SK-N-SH (cell line): ENCODE measurements at regions of chr14 and their contacts with region 1.

Region 1: GRCh38 chr14:93115069-93115820 is 480 bp downstream of the ITPK1 start:
- DNase-seq: peak; percentile 94
- H3K4me3 ChIP-seq: peak overlapping the region; percentile 83 to 87
- H3K27ac ChIP-seq: peak overlapping the region; percentile 61 to 91; a peak in 3 of 4 replicates
- H3K4me1 ChIP-seq: peaks cover 0 to 33% of the 10 kb centered on the region in 2 experiments; a peak in 3 of 4 replicates
- H3K27me3 ChIP-seq: no peaks in the 10 kb centered on the region
- CTCF ChIP-seq: no peak
- EP300 ChIP-seq: no peak
- RAD21 ChIP-seq: no peak

Region 2: GRCh38 chr14:92880869-92881289 is 234.4 kb before region 1 on chr14:
- CTCF ChIA-PET with region 1: interaction called, 17 read pairs
- POLR2A ChIA-PET with region 1: no interaction called
- DNase-seq: peak; percentile 63
- H3K4me3 ChIP-seq: no peak overlapping the region; a peak in 1 of 4 replicates
- H3K27ac ChIP-seq: peak overlapping the region in 1 of 2 experiments; percentile 19; a peak in 1 of 4 replicates
- H3K4me1 ChIP-seq: peaks cover 0 to 35% of the 10 kb centered on the region in 2 experiments; a peak in 1 of 4 replicates
- H3K27me3 ChIP-seq: peaks cover 22% of the 10 kb centered on the region; the same call in 1 of the 2 replicates
- CTCF ChIP-seq: no peak
- EP300 ChIP-seq: no peak
- RAD21 ChIP-seq: peak; percentile 88

Region 3: DNA sequence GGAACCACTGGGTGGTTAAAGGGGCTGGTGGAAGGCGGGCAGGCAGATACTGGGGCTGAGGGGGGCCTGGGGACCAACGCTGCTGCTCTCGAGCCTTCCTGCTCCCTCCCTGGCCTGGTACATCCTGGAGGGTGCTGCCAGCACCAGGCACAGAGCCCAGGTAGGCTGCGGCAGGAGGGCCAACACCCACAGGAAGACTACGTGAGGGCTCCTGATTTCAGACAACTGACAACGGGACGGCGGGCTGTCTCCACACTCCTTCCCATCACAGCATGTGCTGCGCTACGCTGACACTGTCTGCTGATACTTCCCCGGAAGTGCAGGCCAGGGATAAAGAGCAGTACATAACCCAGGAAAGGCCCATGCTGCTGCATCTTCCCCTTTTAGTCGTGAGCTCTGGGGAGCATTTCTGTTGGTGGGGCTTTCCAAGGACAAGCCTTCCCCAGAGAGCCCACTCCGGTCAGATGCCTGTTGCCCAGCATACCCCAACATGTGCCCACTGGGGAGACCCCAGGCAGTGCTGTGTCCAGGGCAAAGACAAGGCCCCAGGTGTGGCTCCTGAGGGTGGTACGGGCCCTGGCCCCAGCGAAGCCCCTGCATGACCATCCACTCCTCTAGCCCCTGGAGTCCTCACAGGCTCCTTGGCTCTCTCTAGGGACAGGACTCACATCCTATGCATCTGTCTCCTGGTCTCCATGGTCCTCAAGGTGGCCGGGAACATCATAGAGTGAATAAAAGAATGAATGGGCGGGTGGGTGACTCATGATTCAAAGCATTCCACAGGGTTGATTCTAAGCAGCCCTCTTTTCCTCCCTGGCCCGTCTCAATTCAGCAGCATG is 154.3 kb before region 1 on chr14:
- CTCF ChIA-PET with region 1: interaction called, 100 read pairs
- POLR2A ChIA-PET with region 1: interaction called, 4 read pairs
- DNase-seq: no peak
- H3K4me3 ChIP-seq: no peak overlapping the region
- H3K27ac ChIP-seq: peak overlapping the region in 1 of 2 experiments; percentile 97; a peak in 2 of 4 replicates
- H3K4me1 ChIP-seq: peaks cover 3 to 83% of the 10 kb centered on the region in 2 experiments; a peak in 3 of 4 replicates
- H3K27me3 ChIP-seq: no peaks in the 10 kb centered on the region
- CTCF ChIP-seq: no peak
- EP300 ChIP-seq: no peak
- RAD21 ChIP-seq: no peak

Region 4: GRCh38 chr14:93012951-93013719 is 102.1 kb before region 1 on chr14:
- CTCF ChIA-PET with region 1: interaction called, 11 read pairs
- POLR2A ChIA-PET with region 1: interaction called, 3 read pairs
- DNase-seq: no peak
- H3K4me3 ChIP-seq: no peak overlapping the region
- H3K27ac ChIP-seq: peak overlapping the region in 1 of 2 experiments; percentile 98; a peak in 2 of 4 replicates
- H3K4me1 ChIP-seq: peaks cover 8 to 95% of the 10 kb centered on the region in 2 experiments
- H3K27me3 ChIP-seq: no peaks in the 10 kb centered on the region
- CTCF ChIP-seq: no peak
- EP300 ChIP-seq: no peak
- RAD21 ChIP-seq: no peak

Region 5: DNA sequence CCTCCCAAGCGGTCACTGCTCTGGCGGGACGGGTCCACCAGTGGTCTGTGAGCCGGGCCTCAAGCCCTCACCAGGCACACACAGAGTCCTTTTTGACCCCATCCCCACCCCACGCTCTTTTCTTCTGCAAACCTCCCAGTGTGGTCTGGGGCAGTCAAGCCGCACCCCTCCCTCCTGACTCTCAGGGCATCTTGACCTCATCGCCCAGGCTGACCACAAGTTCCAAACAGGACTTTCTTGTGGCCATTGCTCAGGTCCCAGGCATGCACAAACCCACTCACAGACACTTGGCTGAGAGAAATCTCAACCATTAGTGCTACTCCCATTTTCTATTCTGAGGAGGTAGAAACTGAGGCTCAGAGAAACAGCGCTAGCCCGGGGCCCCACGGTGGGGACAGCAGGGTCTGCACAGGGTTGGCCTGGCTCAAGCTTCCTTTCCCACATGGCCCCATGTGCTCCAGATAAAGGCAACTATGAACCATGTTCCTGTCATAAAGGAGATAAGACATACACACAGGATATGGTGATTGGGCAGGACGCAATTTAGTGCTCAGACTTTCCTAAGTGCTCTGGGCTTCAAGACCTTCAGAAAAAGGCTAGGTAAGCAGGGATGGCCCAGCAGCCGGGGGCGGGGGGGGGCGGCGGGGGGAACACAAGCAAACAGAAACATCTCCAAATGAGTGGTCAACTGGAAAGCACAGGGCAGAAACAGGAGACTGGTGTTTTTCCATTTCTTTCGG is 69.1 kb before region 1 on chr14:
- CTCF ChIA-PET with region 1: interaction called, 16 read pairs
- POLR2A ChIA-PET with region 1: interaction called, 3 read pairs
- DNase-seq: peak; percentile 85
- H3K4me3 ChIP-seq: no peak overlapping the region
- H3K27ac ChIP-seq: peak overlapping the region in 1 of 2 experiments; percentile 86; a peak in 2 of 4 replicates
- H3K4me1 ChIP-seq: peaks cover 15 to 78% of the 10 kb centered on the region in 2 experiments
- H3K27me3 ChIP-seq: no peaks in the 10 kb centered on the region
- CTCF ChIP-seq: no peak
- EP300 ChIP-seq: peak in 1 of 2 experiments; percentile 88; a peak in 2 of 4 replicates
- RAD21 ChIP-seq: no peak

Region 6: DNA sequence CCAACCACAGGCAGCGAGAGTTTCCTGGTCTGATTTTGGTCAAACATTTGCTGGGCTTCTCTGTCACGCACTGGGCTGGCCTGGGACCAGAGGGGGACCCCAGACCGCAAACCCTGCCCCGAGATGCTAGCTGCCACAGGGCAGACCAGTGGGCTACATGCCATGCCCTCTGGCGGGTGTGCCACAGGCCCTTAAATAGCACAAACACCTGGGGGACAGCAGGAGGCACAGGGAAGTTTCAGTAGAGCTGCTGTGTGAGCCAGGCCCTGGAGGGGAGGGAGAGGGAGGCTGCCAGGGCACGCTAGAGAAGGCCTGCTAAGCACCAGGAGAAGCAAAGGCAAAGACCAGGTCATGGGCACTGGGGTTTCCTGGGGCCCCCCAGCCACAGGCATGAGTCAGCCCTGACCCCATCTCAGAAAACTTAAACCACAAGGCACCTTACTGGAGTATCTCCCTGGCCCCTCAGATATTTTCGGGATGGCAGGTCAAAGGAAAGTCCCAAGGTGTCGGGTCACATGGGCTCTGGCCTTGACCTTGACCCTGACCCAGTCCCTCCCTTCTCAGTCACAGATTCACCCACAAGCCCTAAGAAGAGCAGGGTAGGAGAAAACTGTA is 28.7 kb before region 1 on chr14:
- CTCF ChIA-PET with region 1: interaction called, 23 read pairs
- POLR2A ChIA-PET with region 1: interaction called, 4 read pairs
- DNase-seq: no peak
- H3K4me3 ChIP-seq: no peak overlapping the region
- H3K27ac ChIP-seq: peak overlapping the region in 1 of 2 experiments; percentile 34; a peak in 1 of 4 replicates
- H3K4me1 ChIP-seq: peaks cover 4 to 58% of the 10 kb centered on the region in 2 experiments; a peak in 3 of 4 replicates
- H3K27me3 ChIP-seq: no peaks in the 10 kb centered on the region
- CTCF ChIP-seq: no peak
- EP300 ChIP-seq: no peak
- RAD21 ChIP-seq: no peak

Region 7: GRCh38 chr14:93184388-93185353 is 69.4 kb after region 1 on chr14 and contains the starts of genes LYSET and MOAP1:
- CTCF ChIA-PET with region 1: interaction called, 23 read pairs
- POLR2A ChIA-PET with region 1: interaction called, 5 read pairs
- DNase-seq: peak; percentile 98
- H3K4me3 ChIP-seq: peak within 1 kb of the TSS; percentile 94 to 99
- H3K27ac ChIP-seq: peak within 1 kb of the TSS; percentile 92 to 94
- H3K4me1 ChIP-seq: peaks cover 2 to 17% of the 10 kb centered on the region in 2 experiments; a peak in 2 of 4 replicates
- H3K27me3 ChIP-seq: no peaks in the 10 kb centered on the region
- CTCF ChIP-seq: peak; percentile 31
- EP300 ChIP-seq: no peak
- RAD21 ChIP-seq: no peak
- polyA plus RNA-seq, gene LYSET: 17.7 and 18.5 TPM in 2 replicates
- polyA plus RNA-seq, gene MOAP1: 25.0 and 42.0 TPM in 2 replicates

Region 8: DNA sequence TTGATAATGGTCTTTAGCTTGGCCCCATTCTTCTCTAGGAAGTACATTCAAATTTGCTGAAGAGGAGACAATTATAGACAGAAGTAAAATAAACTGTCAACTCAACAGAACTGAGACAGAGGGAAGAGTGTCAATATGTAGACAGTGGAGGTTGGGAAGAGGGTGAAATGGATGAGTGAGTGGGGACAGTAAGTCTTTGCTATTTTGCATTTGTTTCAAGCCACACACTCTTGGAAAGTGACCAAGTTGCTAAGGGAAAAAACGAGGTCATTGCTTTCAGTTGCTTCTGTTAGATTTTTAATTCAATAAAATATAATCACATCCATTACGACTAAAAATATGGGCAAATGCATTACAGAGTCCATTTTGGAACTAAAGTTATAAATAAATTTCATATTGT is 169.8 kb after region 1 on chr14:
- CTCF ChIA-PET with region 1: no interaction called
- POLR2A ChIA-PET with region 1: no interaction called
- DNase-seq: peak; percentile 17
- H3K4me3 ChIP-seq: no peak overlapping the region
- H3K27ac ChIP-seq: peak overlapping the region in 1 of 2 experiments; percentile 64; a peak in 3 of 4 replicates
- H3K4me1 ChIP-seq: peaks cover 6 to 9% of the 10 kb centered on the region in 2 experiments; a peak in 3 of 4 replicates
- H3K27me3 ChIP-seq: no peaks in the 10 kb centered on the region
- CTCF ChIP-seq: no peak
- EP300 ChIP-seq: no peak
- RAD21 ChIP-seq: no peak

Region 9: DNA sequence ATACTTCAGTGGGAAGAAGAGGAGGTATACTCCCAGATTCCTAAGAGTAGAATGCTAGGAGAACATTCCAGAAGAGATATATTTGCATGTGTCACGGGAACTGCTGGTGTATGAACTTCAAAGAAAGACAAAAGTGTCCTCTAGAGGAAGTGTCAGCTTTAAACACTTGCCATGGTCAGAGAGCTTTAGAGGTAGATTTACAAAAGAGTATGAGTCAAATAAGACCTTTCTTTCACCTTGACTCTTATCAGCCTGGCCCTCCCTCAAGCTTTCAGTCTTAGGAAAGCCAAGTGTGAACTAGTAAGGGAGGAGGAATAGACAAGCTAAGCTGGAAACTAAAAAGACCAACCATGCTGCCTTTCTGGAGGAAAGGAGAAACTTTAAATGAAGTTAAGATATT is 266.4 kb after region 1 on chr14:
- CTCF ChIA-PET with region 1: no interaction called
- POLR2A ChIA-PET with region 1: no interaction called
- DNase-seq: no peak
- H3K4me3 ChIP-seq: no peak overlapping the region
- H3K27ac ChIP-seq: no peak overlapping the region
- H3K4me1 ChIP-seq: no peaks in the 10 kb centered on the region
- H3K27me3 ChIP-seq: no peaks in the 10 kb centered on the region
- CTCF ChIP-seq: no peak
- EP300 ChIP-seq: no peak
- RAD21 ChIP-seq: no peak